Transverse colon (tissue), 4 donors: ENCODE measurements at regions of chr6 and their contacts with region 1.

Region 1: GRCh38 chr6:107674995-107675738 is 148.9 kb downstream of the SCML4 start:
- DNase-seq: peak; percentile 87
- H3K4me3 ChIP-seq: peak overlapping the region in 1 of 4 donors; percentile 37
- H3K27ac ChIP-seq: peak overlapping the region in 3 of 4 donors; percentile 45 to 58 (median 48)
- H3K4me1 ChIP-seq: peaks cover 0 to 20% (median 5%) of the 10 kb centered on the region in 4 donors
- H3K27me3 ChIP-seq: no peaks in the 10 kb centered on the region
- CTCF ChIP-seq: peak; percentile 81 to 96 (median 83)
- EP300 ChIP-seq: no peak
- POLR2A ChIP-seq: no peak

Region 2: GRCh38 chr6:107489636-107490565 is 185.3 kb before region 1 on chr6 and contains the start of gene SOBP:
- in situ Hi-C with region 1: loop called in 1 of 4 experiments (anchors 25 kb)
- intact Hi-C with region 1: no loop called
- DNase-seq: peak; percentile 33
- H3K4me3 ChIP-seq: peak within 1 kb of the TSS; percentile 60 to 80 (median 70)
- H3K27ac ChIP-seq: peak within 1 kb of the TSS; percentile 81 to 92 (median 85)
- H3K4me1 ChIP-seq: peaks cover 7 to 37% (median 25%) of the 10 kb centered on the region in 4 donors
- H3K27me3 ChIP-seq: peaks cover 78% of the 10 kb centered on the region
- CTCF ChIP-seq: no peak
- EP300 ChIP-seq: no peak
- POLR2A ChIP-seq: no peak
- total RNA-seq, gene SOBP: 2.6 to 15.9 (median 4.6) TPM

Region 3: GRCh38 chr6:107704347-107705013 is 29.3 kb after region 1 on chr6:
- in situ Hi-C with region 1: no loop called
- intact Hi-C with region 1: no loop called
- DNase-seq: no peak
- H3K4me3 ChIP-seq: no peak overlapping the region
- H3K27ac ChIP-seq: no peak overlapping the region
- H3K4me1 ChIP-seq: peaks cover 0 to 6% (median 2%) of the 10 kb centered on the region in 4 donors
- H3K27me3 ChIP-seq: no peaks in the 10 kb centered on the region
- CTCF ChIP-seq: peak; percentile 75 to 92 (median 80)
- EP300 ChIP-seq: no peak
- POLR2A ChIP-seq: no peak

Region 4: DNA sequence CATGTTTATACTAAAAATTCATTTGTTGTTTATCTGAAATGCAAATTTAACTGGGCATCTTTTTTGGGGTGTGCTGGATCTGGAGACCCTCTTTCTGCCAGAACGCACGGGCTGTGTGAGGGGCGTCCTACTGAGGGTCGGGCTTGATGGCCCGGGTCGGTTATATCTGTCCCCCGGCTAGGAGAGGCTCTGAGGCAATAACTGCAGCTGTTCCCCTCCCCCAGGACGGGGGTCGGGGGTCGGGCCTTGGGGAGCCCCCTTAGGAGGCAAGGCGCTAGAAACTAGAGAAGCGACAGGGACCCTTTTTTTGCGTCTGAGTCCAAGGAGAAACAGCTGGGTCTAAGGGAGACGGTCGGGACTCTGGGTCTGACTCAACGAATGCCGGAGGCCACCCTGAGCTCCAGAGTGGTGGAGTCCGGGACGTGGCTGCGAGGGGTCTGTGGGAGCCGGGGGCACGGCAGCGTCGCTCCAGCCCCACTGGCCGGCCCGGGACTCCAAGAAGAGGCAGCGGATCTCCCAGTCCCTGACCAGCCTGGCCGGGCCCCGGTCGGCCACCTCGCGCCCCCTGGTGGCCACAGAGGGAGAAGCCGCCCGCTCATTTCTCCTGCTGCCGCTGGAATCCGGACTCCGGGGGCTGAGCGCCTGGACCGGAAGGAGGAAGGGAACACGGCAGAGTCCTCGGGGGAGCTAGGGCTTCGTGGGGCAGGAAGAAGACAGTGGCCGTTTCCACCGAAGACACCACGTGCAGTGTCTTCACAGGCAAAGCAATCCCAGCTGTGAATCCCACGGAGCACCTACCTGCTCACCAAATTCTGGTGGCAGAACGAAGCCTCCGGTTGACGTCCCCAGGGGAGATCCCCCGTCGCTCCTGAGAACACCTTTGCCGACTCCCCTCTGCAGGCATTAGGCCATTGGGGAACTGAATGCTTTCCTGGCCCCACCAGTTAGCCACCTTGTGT is 173.0 kb after region 1 on chr6:
- in situ Hi-C with region 1: loop called (anchors 5 to 25 kb)
- intact Hi-C with region 1: loop called (anchors 10 kb)
- DNase-seq: peak; percentile 88
- H3K4me3 ChIP-seq: peak overlapping the region; percentile 3 to 41 (median 34)
- H3K27ac ChIP-seq: no peak overlapping the region
- H3K4me1 ChIP-seq: peaks cover 0 to 10% (median 3%) of the 10 kb centered on the region in 4 donors
- H3K27me3 ChIP-seq: peaks cover 15% of the 10 kb centered on the region
- CTCF ChIP-seq: peak; percentile 95 to 98 (median 97)
- EP300 ChIP-seq: no peak
- POLR2A ChIP-seq: no peak

Region 5: DNA sequence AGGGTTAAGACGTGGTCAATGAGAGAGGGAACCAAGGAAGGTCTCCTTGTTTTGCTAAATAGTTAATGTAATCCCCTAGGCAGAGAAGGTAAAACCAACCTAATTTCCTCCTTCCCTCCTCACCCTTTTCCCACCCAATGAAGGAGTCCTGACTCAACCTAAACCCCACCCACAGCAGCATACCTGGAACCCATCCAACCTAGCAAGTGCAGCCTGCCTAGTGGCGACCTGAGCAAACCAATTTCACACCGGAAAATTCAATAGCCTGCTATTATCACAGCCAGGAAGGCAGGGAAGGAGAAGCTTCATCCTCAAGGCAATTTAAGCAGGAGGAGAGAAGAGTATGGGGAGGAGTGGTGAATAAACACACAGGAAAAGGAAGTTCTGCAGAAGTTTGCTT is 352.4 kb after region 1 on chr6:
- in situ Hi-C with region 1: loop called in 2 of 4 experiments (anchors 25 kb)
- intact Hi-C with region 1: no loop called
- DNase-seq: peak; percentile 69
- H3K4me3 ChIP-seq: no peak overlapping the region
- H3K27ac ChIP-seq: peak overlapping the region; percentile 22 to 54 (median 33)
- H3K4me1 ChIP-seq: peaks cover 0 to 25% (median 9%) of the 10 kb centered on the region in 4 donors
- H3K27me3 ChIP-seq: no peaks in the 10 kb centered on the region
- CTCF ChIP-seq: no peak
- EP300 ChIP-seq: no peak
- POLR2A ChIP-seq: no peak